ENCODE measurements at regions of chr16 and their contacts with region 1.

Region 1: GRCh38 chr16:68155425-68155824 is 70.3 kb downstream of the NFATC3 start:
- DNase-seq: no peak
- CTCF ChIP-seq: no peak

Region 2: GRCh38 chr16:68166264-68166663 is 10.8 kb after region 1 on chr16:
- CTCF ChIA-PET with region 1: interaction called, 10 read pairs
- POLR2A ChIA-PET with region 1: no interaction called
- DNase-seq: no peak
- CTCF ChIP-seq: no peak

Measured in GM10248 (cell line).